ENCODE measurements at regions of chr15 and their contacts with region 1.

Region 1: DNA sequence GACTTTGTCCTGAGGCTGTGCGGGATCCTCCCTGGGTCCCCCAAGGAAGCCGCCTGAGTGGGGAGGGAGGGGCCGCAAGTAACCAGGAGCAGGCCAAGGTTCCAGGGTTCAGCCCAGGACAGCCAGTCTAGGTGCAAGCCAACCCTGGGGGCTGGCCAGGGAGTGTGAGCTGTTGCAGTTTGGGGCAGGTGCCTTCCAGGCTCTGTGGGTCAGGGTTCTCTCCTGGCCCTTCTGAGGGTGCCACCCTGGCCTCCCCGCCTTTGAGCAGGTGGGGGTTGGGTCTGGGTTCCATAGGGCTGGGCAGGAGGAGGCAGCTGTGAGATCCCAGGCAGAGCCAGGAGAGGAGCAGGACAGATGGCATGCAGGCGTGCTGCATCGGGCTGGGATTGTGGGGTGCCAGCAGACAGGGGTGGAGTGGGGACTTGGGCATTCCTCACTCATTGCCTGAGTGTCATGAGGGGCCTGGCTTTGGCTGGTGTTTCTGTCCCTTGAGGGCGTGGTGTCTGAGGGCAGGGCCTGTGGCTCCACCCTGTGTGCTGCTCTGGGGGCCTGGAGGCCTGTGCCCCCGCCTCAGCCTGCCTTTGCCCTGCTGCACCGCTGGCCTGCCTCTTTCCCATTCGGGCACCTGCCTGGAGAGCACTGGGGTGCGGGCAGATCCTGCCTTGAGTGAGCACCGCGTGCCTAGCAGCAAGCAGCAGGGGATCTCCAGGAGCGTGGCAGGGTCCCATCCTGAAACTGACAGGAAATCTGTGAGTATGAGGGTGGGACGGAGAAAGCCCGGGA is 18.4 kb downstream of the KLF13 start:
- DNase-seq: no peak
- ATAC-seq: peak; percentile 62
- H3K4me3 ChIP-seq: peak overlapping the region in 4 of 5 experiments; percentile 42 to 70 (median 58)
- H3K4me3 Mint-ChIP-seq: peak overlapping the region; percentile 95
- H3K27ac ChIP-seq: peak overlapping the region; percentile 90 to 97
- H3K27ac Mint-ChIP-seq: peak overlapping the region; percentile 99
- H3K4me1 ChIP-seq: peaks cover 100% of the 10 kb centered on the region in 2 donors
- H3K4me1 Mint-ChIP-seq: peaks cover 99% of the 10 kb centered on the region
- H3K27me3 ChIP-seq: no peaks in the 10 kb centered on the region
- H3K27me3 Mint-ChIP-seq: no peaks in the 10 kb centered on the region
- CTCF ChIP-seq: no peak

Region 2: GRCh38 chr15:31241888-31242522 is 103.0 kb before region 1 on chr15:
- CTCF ChIA-PET with region 1: no interaction called
- POLR2A ChIA-PET with region 1: no interaction called
- intact Hi-C with region 1: no loop called
- DNase-seq: no peak
- ATAC-seq: no peak
- H3K4me3 ChIP-seq: no peak overlapping the region
- H3K4me3 Mint-ChIP-seq: no peak overlapping the region
- H3K27ac ChIP-seq: no peak overlapping the region
- H3K27ac Mint-ChIP-seq: no peak overlapping the region
- H3K4me1 ChIP-seq: peaks cover 12 to 13% of the 10 kb centered on the region in 2 donors
- H3K4me1 Mint-ChIP-seq: peaks cover 18% of the 10 kb centered on the region
- H3K27me3 ChIP-seq: no peaks in the 10 kb centered on the region
- H3K27me3 Mint-ChIP-seq: no peaks in the 10 kb centered on the region
- CTCF ChIP-seq: no peak

Region 3: GRCh38 chr15:31391687-31392671 is 47.0 kb after region 1 on chr15:
- CTCF ChIA-PET with region 1: no interaction called
- POLR2A ChIA-PET with region 1: no interaction called
- intact Hi-C with region 1: loop called (anchors 5 kb)
- DNase-seq: peak; percentile 86
- ATAC-seq: peak; percentile 92
- H3K4me3 ChIP-seq: peak overlapping the region; percentile 22 to 90 (median 82)
- H3K4me3 Mint-ChIP-seq: peak overlapping the region; percentile 94
- H3K27ac ChIP-seq: peak overlapping the region; percentile 48 to 52
- H3K27ac Mint-ChIP-seq: peak overlapping the region; percentile 89
- H3K4me1 ChIP-seq: peaks cover 3 to 13% of the 10 kb centered on the region in 2 donors
- H3K4me1 Mint-ChIP-seq: peaks cover 17% of the 10 kb centered on the region
- H3K27me3 ChIP-seq: no peaks in the 10 kb centered on the region
- H3K27me3 Mint-ChIP-seq: no peaks in the 10 kb centered on the region
- CTCF ChIP-seq: no peak

Measured in B cell (primary cell).